Activated naive CD4-positive, alpha-beta T cell treated with anti-CD3 and anti-CD28 coated beads for 36 hours (primary cell): ENCODE measurements at regions of chr17 and their contacts with region 1.

Region 1: GRCh38 chr17:43170766-43171585 is at the start of gene NBR1:
- DNase-seq: peak; percentile 99
- H3K4me3 Mint-ChIP-seq: no peak within 1 kb of the TSS
- H3K27ac Mint-ChIP-seq: no peak within 1 kb of the TSS
- H3K4me1 Mint-ChIP-seq: peaks cover 36% of the 10 kb centered on the region
- H3K27me3 Mint-ChIP-seq: no peaks in the 10 kb centered on the region
- total RNA-seq, gene NBR1: 62.1 to 66.8 TPM

Region 2: GRCh38 chr17:41918314-41919164 is 1252.4 kb before region 1 on chr17 and contains the start of gene ACLY:
- CTCF ChIA-PET with region 1: no interaction called
- intact Hi-C with region 1: loop called (anchors 5 kb)
- DNase-seq: peak; percentile 96
- H3K4me3 Mint-ChIP-seq: peak within 1 kb of the TSS; percentile 94
- H3K27ac Mint-ChIP-seq: peak within 1 kb of the TSS; percentile 82
- H3K4me1 Mint-ChIP-seq: peaks cover 39% of the 10 kb centered on the region
- H3K27me3 Mint-ChIP-seq: no peaks in the 10 kb centered on the region
- total RNA-seq, gene ACLY: 153 to 161 TPM

Region 3: DNA sequence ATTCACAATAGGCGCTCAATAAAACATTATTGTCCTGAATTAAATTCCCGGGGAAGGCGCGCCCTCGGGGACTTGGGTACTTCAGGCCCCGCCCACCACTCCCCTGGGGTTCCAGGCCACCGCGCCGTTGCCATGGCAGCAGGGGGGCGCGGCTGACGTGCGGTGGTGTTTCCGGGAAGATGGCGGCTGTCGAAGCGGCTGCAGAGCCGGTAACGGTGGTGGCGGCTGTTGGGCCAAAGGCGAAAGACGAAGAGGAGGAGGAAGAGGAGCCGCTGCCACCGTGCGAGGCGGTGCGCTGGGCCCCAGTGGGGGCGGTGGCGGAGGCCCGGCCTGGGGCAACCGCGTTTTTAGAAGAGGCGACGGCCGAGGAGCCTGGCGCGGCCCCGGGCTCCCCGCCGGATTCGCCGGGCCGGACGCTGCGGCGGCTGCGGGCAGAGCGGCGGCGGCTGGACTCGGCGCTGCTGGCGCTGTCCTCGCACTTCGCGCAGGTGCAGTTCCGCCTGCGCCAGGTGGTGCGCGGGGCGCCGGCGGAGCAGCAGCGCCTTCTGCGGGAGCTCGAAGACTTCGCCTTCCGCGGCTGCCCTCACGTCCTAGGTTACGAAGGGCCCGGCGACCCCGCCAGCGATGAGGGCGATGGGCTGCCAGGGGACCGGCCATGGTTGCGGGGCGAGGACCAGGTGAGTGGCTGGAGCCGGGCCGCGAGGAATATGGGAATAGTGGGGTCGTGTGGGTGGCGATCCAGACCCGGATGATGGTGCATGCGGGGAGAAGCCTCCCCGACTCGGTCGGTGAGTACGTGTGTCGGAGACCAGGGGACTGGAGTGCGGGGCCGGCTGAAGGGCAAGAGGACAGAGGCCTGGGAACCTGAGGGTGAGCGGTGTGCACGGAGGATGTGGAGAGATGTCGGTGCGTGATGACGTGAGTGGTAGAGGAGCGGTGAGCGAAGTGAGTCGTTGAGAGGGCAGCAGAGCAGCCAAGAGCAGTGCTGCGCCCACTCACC is 190.3 kb before region 1 on chr17 and contains the start of gene RUNDC1:
- CTCF ChIA-PET with region 1: no interaction called
- intact Hi-C with region 1: loop called (anchors 1 kb)
- DNase-seq: peak; percentile 90
- H3K4me3 Mint-ChIP-seq: peak within 1 kb of the TSS; percentile 99
- H3K27ac Mint-ChIP-seq: peak within 1 kb of the TSS; percentile 90
- H3K4me1 Mint-ChIP-seq: peaks cover 36% of the 10 kb centered on the region
- H3K27me3 Mint-ChIP-seq: no peaks in the 10 kb centered on the region
- total RNA-seq, gene RUNDC1: 5.9 to 6.5 TPM

Region 4: GRCh38 chr17:43104665-43105064 is 66.3 kb before region 1 on chr17:
- CTCF ChIA-PET with region 1: no interaction called
- intact Hi-C with region 1: no loop called
- DNase-seq: no peak
- H3K4me3 Mint-ChIP-seq: no peak overlapping the region
- H3K27ac Mint-ChIP-seq: no peak overlapping the region
- H3K4me1 Mint-ChIP-seq: no peaks in the 10 kb centered on the region
- H3K27me3 Mint-ChIP-seq: no peaks in the 10 kb centered on the region

Region 5: DNA sequence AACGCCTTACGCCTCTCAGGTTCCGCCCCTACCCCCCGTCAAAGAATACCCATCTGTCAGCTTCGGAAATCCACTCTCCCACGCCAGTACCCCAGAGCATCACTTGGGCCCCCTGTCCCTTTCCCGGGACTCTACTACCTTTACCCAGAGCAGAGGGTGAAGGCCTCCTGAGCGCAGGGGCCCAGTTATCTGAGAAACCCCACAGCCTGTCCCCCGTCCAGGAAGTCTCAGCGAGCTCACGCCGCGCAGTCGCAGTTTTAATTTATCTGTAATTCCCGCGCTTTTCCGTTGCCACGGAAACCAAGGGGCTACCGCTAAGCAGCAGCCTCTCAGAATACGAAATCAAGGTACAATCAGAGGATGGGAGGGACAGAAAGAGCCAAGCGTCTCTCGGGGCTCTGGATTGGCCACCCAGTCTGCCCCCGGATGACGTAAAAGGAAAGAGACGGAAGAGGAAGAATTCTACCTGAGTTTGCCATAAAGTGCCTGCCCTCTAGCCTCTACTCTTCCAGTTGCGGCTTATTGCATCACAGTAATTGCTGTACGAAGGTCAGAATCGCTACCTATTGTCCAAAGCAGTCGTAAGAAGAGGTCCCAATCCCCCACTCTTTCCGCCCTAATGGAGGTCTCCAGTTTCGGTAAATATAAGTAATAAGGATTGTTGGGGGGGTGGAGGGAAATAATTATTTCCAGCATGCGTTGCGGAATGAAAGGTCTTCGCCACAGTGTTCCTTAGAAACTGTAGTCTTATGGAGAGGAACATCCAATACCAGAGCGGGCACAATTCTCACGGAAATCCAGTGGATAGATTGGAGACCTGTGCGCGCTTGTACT is 45.6 kb before region 1 on chr17 and contains the start of gene BRCA1:
- CTCF ChIA-PET with region 1: interaction called, 3 read pairs
- intact Hi-C with region 1: loop called (anchors 1 kb)
- DNase-seq: peak; percentile 99
- H3K4me3 Mint-ChIP-seq: peak within 1 kb of the TSS; percentile 100
- H3K27ac Mint-ChIP-seq: peak within 1 kb of the TSS; percentile 99
- H3K4me1 Mint-ChIP-seq: peaks cover 39% of the 10 kb centered on the region
- H3K27me3 Mint-ChIP-seq: no peaks in the 10 kb centered on the region
- total RNA-seq, gene BRCA1: 77.4 to 80.6 TPM

Region 6: DNA sequence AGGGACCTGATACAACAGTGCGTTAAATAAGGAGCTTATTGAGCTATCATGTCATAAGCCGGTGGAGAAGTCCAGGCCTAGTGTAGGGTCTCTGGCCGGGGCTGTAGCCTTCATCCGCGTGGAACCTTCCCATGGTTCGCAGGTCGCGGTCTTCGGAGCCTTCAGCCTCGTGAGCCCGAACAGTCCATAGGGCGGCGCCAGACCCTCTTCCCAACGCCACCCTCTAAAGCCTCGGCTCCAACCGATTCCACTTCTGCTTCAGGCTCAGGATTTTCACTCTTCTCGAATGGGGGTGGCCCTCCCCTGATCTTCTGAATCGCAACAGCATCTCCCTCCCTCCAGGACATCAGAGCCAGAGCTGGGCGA is 35.5 kb before region 1 on chr17:
- CTCF ChIA-PET with region 1: no interaction called
- intact Hi-C with region 1: no loop called
- DNase-seq: no peak
- H3K4me3 Mint-ChIP-seq: no peak overlapping the region
- H3K27ac Mint-ChIP-seq: no peak overlapping the region
- H3K4me1 Mint-ChIP-seq: peaks cover 3% of the 10 kb centered on the region
- H3K27me3 Mint-ChIP-seq: no peaks in the 10 kb centered on the region

Region 7: DNA sequence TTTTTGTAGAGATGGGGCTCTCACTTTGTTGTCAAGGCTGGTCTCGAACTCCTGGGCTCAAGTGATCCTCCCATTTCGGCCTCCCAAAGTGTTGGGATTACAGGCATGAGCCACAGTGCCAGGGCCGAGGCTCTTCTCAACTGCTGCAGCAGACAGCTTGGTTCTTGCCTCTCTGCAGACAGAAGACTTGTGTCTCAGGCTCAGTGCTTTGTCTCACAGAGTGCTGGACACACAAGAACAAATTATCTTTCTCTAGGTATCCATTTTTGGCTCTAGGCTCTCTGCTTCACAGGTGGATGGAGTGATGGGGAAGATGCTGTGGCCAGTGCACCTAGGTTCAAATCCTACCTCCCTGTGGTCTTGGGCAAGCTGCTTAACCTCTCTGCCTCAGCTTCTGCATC is 143.6 kb after region 1 on chr17:
- CTCF ChIA-PET with region 1: interaction called, 3 read pairs
- intact Hi-C with region 1: loop called (anchors 1 kb)
- DNase-seq: no peak
- H3K4me3 Mint-ChIP-seq: no peak overlapping the region
- H3K27ac Mint-ChIP-seq: no peak overlapping the region
- H3K4me1 Mint-ChIP-seq: peaks cover 20% of the 10 kb centered on the region
- H3K27me3 Mint-ChIP-seq: no peaks in the 10 kb centered on the region